ENCODE measurements at regions of chr17 and their contacts with region 1.

Region 1: GRCh38 chr17:79993198-79994032 is 42.3 kb downstream of the TBC1D16 start:
- DNase-seq: no peak
- ATAC-seq: peak; percentile 68
- H3K4me3 ChIP-seq: no peak overlapping the region
- H3K27ac ChIP-seq: no peak overlapping the region
- H3K4me1 ChIP-seq: 0 out of 2 replicates have a peak, but pooled peaks cover 4% of the 10 kb centered on the region
- H3K27me3 ChIP-seq: peaks cover 1 to 3% of the 10 kb centered on the region in 2 experiments; a peak in 2 of 4 replicates
- CTCF ChIP-seq: no peak
- EP300 ChIP-seq: no peak
- POLR2A ChIP-seq: no peak; the same call in 1 of the 2 replicates
- RAD21 ChIP-seq: no peak

Region 2: GRCh38 chr17:80008383-80008840 is 15.0 kb after region 1 on chr17:
- CTCF ChIA-PET with region 1: interaction called, 13 read pairs
- POLR2A ChIA-PET with region 1: interaction called, 3 read pairs
- RAD21 ChIA-PET with region 1: no interaction called
- SMC1A ChIA-PET with region 1: interaction called, 5 read pairs
- in situ Hi-C with region 1: no loop called
- intact Hi-C with region 1: no loop called
- DNase-seq: no peak
- ATAC-seq: peak; percentile 95
- H3K4me3 ChIP-seq: no peak overlapping the region
- H3K27ac ChIP-seq: no peak overlapping the region
- H3K4me1 ChIP-seq: no peaks in the 10 kb centered on the region
- H3K27me3 ChIP-seq: no peaks in the 10 kb centered on the region; a peak in 1 of 4 replicates
- CTCF ChIP-seq: peak; percentile 85 to 97 (median 93)
- EP300 ChIP-seq: no peak
- POLR2A ChIP-seq: no peak
- RAD21 ChIP-seq: peak; percentile 40

Region 3: GRCh38 chr17:80145086-80146075 is 152.0 kb after region 1 on chr17:
- CTCF ChIA-PET with region 1: no interaction called
- POLR2A ChIA-PET with region 1: no interaction called
- RAD21 ChIA-PET with region 1: no interaction called
- SMC1A ChIA-PET with region 1: no interaction called
- in situ Hi-C with region 1: no loop called
- intact Hi-C with region 1: no loop called
- DNase-seq: no peak
- ATAC-seq: no peak
- H3K4me3 ChIP-seq: peak overlapping the region; percentile 92
- H3K27ac ChIP-seq: no peak overlapping the region
- H3K4me1 ChIP-seq: peaks cover 15% of the 10 kb centered on the region
- H3K27me3 ChIP-seq: no peaks in the 10 kb centered on the region
- CTCF ChIP-seq: no peak
- EP300 ChIP-seq: no peak
- POLR2A ChIP-seq: no peak; the same call in 1 of the 2 replicates
- RAD21 ChIP-seq: no peak

Measured in GM12878 (cell line).